Heart left ventricle (tissue), 16 donors: ENCODE measurements at regions of chr11 and their contacts with region 1.

Region 1: GRCh38 chr11:14022251-14022650 is 59.7 kb downstream of the SPON1 start:
- DNase-seq: no peak
- ATAC-seq: no peak
- H3K4me3 ChIP-seq: no peak overlapping the region
- H3K27ac ChIP-seq: no peak overlapping the region
- H3K4me1 ChIP-seq: peaks cover 0 to 16% (median 0%) of the 10 kb centered on the region in 12 donors
- H3K27me3 ChIP-seq: peaks cover 0 to 33% (median 0%) of the 10 kb centered on the region in 9 donors
- CTCF ChIP-seq: no peak
- POLR2A ChIP-seq: no peak

Region 2: DNA sequence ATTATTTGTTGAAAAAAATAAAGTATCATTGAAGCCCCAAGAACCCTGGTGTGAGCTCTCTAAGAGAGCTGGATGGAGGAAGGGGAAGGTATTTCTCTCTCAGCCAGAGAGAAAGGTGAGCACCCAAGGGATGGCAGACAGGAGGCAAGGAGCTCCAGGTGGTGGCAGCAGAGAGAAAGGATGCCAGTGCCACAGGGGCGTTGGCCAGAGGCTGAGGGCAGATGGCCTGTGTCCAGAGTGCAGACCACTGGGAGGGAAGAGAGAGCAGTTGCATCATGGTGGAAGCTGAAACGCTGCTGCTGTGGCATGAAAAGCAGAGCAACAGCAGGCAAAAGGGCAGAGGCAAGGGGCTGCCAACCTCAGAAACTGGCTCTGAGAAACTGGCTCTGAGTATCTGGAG is 51.3 kb before region 1 on chr11:
- intact Hi-C with region 1: loop called in 1 of 10 experiments (anchors 5 kb)
- DNase-seq: peak in 2 of 5 donors; percentile 28 to 54
- ATAC-seq: peak in 3 of 4 donors; percentile 40 to 52 (median 49)
- H3K4me3 ChIP-seq: no peak overlapping the region
- H3K27ac ChIP-seq: no peak overlapping the region
- H3K4me1 ChIP-seq: peaks cover 0 to 23% (median 12%) of the 10 kb centered on the region in 12 donors
- H3K27me3 ChIP-seq: peaks cover 0 to 38% (median 15%) of the 10 kb centered on the region in 9 donors
- CTCF ChIP-seq: peak in 8 of 12 donors; percentile 10 to 45 (median 22)
- POLR2A ChIP-seq: no peak

Region 3: DNA sequence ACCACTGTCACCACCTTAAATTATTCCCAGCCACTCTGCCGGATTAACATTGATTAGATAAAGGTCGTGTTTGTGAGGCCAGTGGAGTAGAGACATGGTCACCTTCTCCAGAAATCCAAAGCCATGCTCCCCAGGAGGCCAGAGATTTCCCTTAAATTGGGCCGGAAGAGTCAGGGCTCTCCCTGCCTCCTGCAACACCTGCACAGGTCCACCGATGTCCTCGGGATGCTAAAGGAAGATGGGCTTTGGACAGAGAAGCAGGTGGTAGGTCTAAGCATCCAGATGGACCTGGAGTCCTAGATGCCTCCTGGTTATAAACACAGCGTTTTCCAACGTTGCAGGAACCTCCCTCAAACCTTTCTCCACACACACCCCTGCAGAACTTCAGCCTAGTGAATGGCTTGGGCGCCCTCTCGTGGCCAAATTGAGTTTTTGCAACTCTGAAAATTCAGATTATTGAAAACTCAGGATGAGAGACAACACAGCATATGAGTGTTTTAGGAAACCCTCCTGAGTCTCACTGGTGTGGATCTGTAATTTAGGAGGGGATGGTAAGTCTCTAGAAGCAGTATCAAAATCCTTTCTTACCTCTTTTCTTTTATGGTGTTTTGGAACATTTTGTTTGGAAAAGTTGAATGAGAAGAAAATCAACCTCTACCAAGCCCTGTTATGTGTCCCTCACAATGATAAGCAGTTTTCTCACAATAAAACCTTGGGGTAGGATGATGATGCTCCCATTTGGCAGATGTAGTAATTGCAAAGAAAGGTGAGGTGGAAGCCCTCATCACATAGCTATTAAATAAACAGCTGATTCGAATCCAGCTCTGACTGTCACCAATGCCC is 227.1 kb after region 1 on chr11:
- intact Hi-C with region 1: no loop called
- DNase-seq: peak in 4 of 5 donors; percentile 37 to 75 (median 53)
- ATAC-seq: peak in 3 of 4 donors; percentile 49 to 64 (median 51)
- H3K4me3 ChIP-seq: no peak overlapping the region
- H3K27ac ChIP-seq: no peak overlapping the region
- H3K4me1 ChIP-seq: peaks cover 0 to 20% (median 2%) of the 10 kb centered on the region in 12 donors
- H3K27me3 ChIP-seq: peaks cover 0 to 43% (median 2%) of the 10 kb centered on the region in 9 donors
- CTCF ChIP-seq: peak; percentile 80 to 93 (median 90)
- POLR2A ChIP-seq: no peak

Region 4: GRCh38 chr11:14336507-14337503 is 314.6 kb after region 1 on chr11:
- intact Hi-C with region 1: no loop called
- DNase-seq: no peak
- ATAC-seq: peak in 2 of 4 donors; percentile 36 to 39
- H3K4me3 ChIP-seq: no peak overlapping the region
- H3K27ac ChIP-seq: no peak overlapping the region
- H3K4me1 ChIP-seq: peaks cover 0 to 18% (median 6%) of the 10 kb centered on the region in 12 donors
- H3K27me3 ChIP-seq: no peaks in the 10 kb centered on the region
- CTCF ChIP-seq: no peak
- POLR2A ChIP-seq: no peak

Region 5: GRCh38 chr11:14513800-14514199 is 491.5 kb after region 1 on chr11:
- intact Hi-C with region 1: no loop called
- DNase-seq: no peak
- ATAC-seq: no peak
- H3K4me3 ChIP-seq: no peak overlapping the region
- H3K27ac ChIP-seq: no peak overlapping the region
- H3K4me1 ChIP-seq: peaks cover 3 to 13% (median 9%) of the 10 kb centered on the region in 12 donors
- H3K27me3 ChIP-seq: no peaks in the 10 kb centered on the region
- CTCF ChIP-seq: no peak
- POLR2A ChIP-seq: no peak